ENCODE measurements at regions of chr9 and their contacts with region 1.

Region 1: GRCh38 chr9:98255578-98256296 is at the start of gene TBC1D2:
- DNase-seq: peak; percentile 95 to 99 (median 98)
- ATAC-seq: peak; percentile 86
- H3K4me3 ChIP-seq: peak within 1 kb of the TSS; percentile 81
- H3K4me3 Mint-ChIP-seq: peak within 1 kb of the TSS; percentile 99
- H3K27ac ChIP-seq: peak within 1 kb of the TSS; percentile 79 to 83
- H3K27ac Mint-ChIP-seq: peak within 1 kb of the TSS; percentile 92
- H3K4me1 ChIP-seq: peaks cover 39% of the 10 kb centered on the region
- H3K4me1 Mint-ChIP-seq: peaks cover 34% of the 10 kb centered on the region
- H3K27me3 ChIP-seq: no peaks in the 10 kb centered on the region
- H3K27me3 Mint-ChIP-seq: no peaks in the 10 kb centered on the region
- CTCF ChIP-seq: peak; percentile 11
- total RNA-seq, gene TBC1D2: 2.9 to 4.0 TPM

Region 2: GRCh38 chr9:97411789-97412625 is 843.7 kb before region 1 on chr9 and contains the start of gene TDRD7:
- CTCF ChIA-PET with region 1: no interaction called
- POLR2A ChIA-PET with region 1: interaction called, 3 read pairs
- intact Hi-C with region 1: loop called in 1 of 2 experiments (anchors 10 kb)
- DNase-seq: peak; percentile 81 to 98 (median 92)
- ATAC-seq: peak; percentile 88
- H3K4me3 ChIP-seq: peak within 1 kb of the TSS; percentile 79
- H3K4me3 Mint-ChIP-seq: peak within 1 kb of the TSS; percentile 90
- H3K27ac ChIP-seq: peak within 1 kb of the TSS; percentile 41 to 52
- H3K27ac Mint-ChIP-seq: peak within 1 kb of the TSS; percentile 82
- H3K4me1 ChIP-seq: peaks cover 12% of the 10 kb centered on the region
- H3K4me1 Mint-ChIP-seq: peaks cover 40% of the 10 kb centered on the region
- H3K27me3 ChIP-seq: peaks cover 0 to 5% of the 10 kb centered on the region in 2 experiments
- H3K27me3 Mint-ChIP-seq: peaks cover 20% of the 10 kb centered on the region
- CTCF ChIP-seq: peak; percentile 97
- total RNA-seq, gene TDRD7: 3.3 to 3.6 TPM

Region 3: DNA sequence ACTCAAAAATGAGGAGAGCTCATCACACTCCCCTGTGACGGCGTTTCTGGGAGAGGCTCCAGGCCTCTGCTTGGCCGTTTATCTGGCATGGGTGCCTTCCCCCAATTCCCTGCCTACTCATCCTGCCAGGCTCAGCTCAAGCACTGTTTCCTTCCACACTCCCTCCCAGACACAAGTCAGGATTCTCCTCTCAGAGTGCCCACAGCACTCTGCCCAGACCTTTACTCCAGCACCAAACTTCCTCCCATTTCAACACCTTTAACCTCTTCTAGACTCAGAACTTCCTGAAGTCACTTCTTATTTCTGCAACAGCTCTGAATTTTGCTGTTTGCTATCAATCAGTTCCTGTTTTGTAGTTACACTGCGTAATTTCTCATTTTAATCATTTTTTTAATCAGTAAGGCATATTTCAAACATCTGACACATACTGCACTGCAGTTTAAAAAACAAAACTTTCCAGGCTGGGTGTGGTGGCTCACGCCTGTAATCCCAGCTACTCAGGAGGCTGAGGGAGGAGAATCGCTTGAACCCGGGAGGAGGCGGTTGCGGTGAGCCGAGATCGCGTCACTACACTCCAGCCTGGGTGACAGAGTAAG is 349.4 kb before region 1 on chr9:
- CTCF ChIA-PET with region 1: no interaction called
- POLR2A ChIA-PET with region 1: interaction called, 21 read pairs
- intact Hi-C with region 1: loop called (anchors 5 kb)
- DNase-seq: peak in 11 of 14 experiments; percentile 17 to 81 (median 58)
- ATAC-seq: peak; percentile 51
- H3K4me3 ChIP-seq: peak overlapping the region; percentile 44
- H3K4me3 Mint-ChIP-seq: peak overlapping the region; percentile 82
- H3K27ac ChIP-seq: peak overlapping the region; percentile 81 to 86
- H3K27ac Mint-ChIP-seq: peak overlapping the region; percentile 96
- H3K4me1 ChIP-seq: peaks cover 92% of the 10 kb centered on the region
- H3K4me1 Mint-ChIP-seq: peaks cover 94% of the 10 kb centered on the region
- H3K27me3 ChIP-seq: no peaks in the 10 kb centered on the region
- H3K27me3 Mint-ChIP-seq: no peaks in the 10 kb centered on the region
- CTCF ChIP-seq: no peak

Region 4: DNA sequence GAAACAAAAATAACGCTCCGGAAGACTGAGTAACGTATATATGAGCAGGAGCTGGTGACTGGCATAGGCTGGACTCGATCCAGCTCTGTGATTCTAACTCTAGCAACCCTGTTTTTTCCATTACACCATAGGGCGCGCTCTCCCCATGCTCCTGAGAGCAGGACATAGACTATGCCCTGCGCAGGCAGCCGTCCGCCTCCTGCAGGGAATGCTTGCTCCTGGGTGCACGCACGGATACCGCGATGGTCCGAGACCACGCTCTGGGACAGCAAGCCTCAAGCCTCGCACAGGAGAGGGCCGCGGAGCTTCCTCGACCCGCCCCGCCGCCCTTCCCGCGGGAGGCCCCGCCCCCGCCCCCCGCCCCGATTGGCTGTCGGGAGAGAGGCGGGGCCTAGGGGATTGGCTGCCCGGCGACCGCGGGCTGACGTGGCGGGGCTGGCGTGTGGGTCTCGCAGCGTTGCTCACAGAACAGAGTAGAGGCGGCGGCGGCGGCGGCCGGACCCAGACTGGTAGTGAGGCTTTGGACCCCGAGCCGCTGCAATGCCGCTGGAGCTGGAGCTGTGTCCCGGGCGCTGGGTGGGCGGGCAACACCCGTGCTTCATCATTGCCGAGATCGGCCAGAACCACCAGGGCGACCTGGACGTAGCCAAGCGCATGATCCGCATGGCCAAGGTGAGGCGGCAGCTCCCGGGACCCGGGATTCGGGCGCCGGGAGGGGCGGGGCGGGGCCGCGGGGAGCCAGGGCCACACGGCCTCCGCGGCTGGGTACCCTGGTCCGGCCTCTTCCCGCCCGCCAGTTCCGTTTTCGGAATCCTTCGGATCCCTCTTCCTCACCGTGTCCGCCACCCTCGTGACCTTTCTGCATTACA is 199.2 kb before region 1 on chr9 and contains the start of gene NANS:
- CTCF ChIA-PET with region 1: no interaction called
- POLR2A ChIA-PET with region 1: interaction called, 56 read pairs
- intact Hi-C with region 1: loop called (anchors 2 to 5 kb)
- DNase-seq: peak; percentile 81 to 95 (median 88)
- ATAC-seq: peak; percentile 92
- H3K4me3 ChIP-seq: peak within 1 kb of the TSS; percentile 71
- H3K4me3 Mint-ChIP-seq: peak within 1 kb of the TSS; percentile 98
- H3K27ac ChIP-seq: peak within 1 kb of the TSS; percentile 64 to 75
- H3K27ac Mint-ChIP-seq: peak within 1 kb of the TSS; percentile 93
- H3K4me1 ChIP-seq: peaks cover 27% of the 10 kb centered on the region
- H3K4me1 Mint-ChIP-seq: peaks cover 28% of the 10 kb centered on the region
- H3K27me3 ChIP-seq: no peaks in the 10 kb centered on the region
- H3K27me3 Mint-ChIP-seq: no peaks in the 10 kb centered on the region
- CTCF ChIP-seq: no peak
- total RNA-seq, gene NANS: 70.5 to 74.0 TPM

Region 5: DNA sequence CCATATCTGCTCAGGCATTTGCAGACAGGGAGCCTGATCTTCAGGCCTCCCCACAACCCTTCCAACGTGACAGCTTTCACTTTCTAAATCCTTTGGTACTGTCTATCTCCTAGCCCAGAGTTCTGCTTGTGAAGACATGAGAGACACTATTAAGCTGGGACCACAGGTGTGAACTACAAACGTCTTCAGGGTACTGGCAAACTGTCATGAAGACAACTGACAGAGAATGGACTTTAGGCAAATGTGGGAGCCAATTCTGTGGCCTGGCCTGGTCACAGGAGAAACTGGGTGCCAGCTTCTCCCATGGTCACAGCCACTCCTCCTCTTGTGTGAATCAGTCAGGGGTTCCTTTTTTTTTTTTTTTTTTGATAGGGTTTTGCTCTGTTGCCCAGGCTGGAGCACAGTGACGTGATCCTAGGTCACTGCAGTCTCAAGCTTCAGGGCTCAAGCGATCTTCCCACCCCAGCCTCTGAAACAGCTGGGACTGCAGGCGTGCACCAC is 147.2 kb before region 1 on chr9:
- CTCF ChIA-PET with region 1: interaction called, 4 read pairs
- POLR2A ChIA-PET with region 1: interaction called, 19 read pairs
- intact Hi-C with region 1: loop called in 1 of 2 experiments (anchors 10 kb)
- DNase-seq: peak in 10 of 14 experiments; percentile 16 to 83 (median 24)
- ATAC-seq: peak; percentile 91
- H3K4me3 ChIP-seq: no peak overlapping the region
- H3K4me3 Mint-ChIP-seq: peak overlapping the region; percentile 42
- H3K27ac ChIP-seq: peak overlapping the region; percentile 75 to 79
- H3K27ac Mint-ChIP-seq: peak overlapping the region; percentile 91
- H3K4me1 ChIP-seq: peaks cover 69% of the 10 kb centered on the region
- H3K4me1 Mint-ChIP-seq: peaks cover 85% of the 10 kb centered on the region
- H3K27me3 ChIP-seq: no peaks in the 10 kb centered on the region
- H3K27me3 Mint-ChIP-seq: no peaks in the 10 kb centered on the region
- CTCF ChIP-seq: no peak

Region 6: DNA sequence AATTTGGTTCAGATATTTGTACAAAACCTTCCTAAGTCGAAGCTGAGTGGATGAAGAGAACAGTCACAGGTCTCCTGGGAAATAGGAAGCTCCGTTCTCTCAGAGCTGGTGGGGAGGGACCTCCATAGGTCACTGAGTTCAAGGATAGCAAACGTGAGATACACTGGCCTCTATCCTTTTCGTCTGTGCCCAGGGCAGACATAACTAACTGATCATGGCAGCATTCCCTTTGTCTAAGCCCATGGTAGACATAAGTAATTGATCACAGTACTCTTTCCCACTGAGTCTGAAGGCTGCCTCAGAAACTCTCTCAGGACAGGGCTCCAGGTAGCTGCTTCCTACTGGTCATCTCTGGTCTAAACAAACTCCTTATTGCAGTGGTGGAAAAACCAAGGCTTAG is 51.0 kb before region 1 on chr9:
- CTCF ChIA-PET with region 1: interaction called, 4 read pairs
- POLR2A ChIA-PET with region 1: interaction called, 10 read pairs
- intact Hi-C with region 1: no loop called
- DNase-seq: no peak
- ATAC-seq: no peak
- H3K4me3 ChIP-seq: no peak overlapping the region
- H3K4me3 Mint-ChIP-seq: no peak overlapping the region
- H3K27ac ChIP-seq: no peak overlapping the region
- H3K27ac Mint-ChIP-seq: no peak overlapping the region
- H3K4me1 ChIP-seq: peaks cover 8% of the 10 kb centered on the region
- H3K4me1 Mint-ChIP-seq: peaks cover 6% of the 10 kb centered on the region
- H3K27me3 ChIP-seq: no peaks in the 10 kb centered on the region
- H3K27me3 Mint-ChIP-seq: no peaks in the 10 kb centered on the region
- CTCF ChIP-seq: no peak

Measured in CD4-positive, alpha-beta T cell (primary cell).